MCF 10A (cell line): ENCODE measurements at regions of chr3 and their contacts with region 1.

Region 1: GRCh38 chr3:170740726-170741591 is 129.0 kb downstream of the RPL22L1 start:
- DNase-seq: peak; percentile 87
- H3K4me3 Mint-ChIP-seq: peak overlapping the region; percentile 5
- H3K27ac Mint-ChIP-seq: peak overlapping the region; percentile 85
- H3K4me1 Mint-ChIP-seq: peaks cover 44% of the 10 kb centered on the region
- H3K27me3 Mint-ChIP-seq: no peaks in the 10 kb centered on the region
- CTCF ChIP-seq: no peak

Region 2: DNA sequence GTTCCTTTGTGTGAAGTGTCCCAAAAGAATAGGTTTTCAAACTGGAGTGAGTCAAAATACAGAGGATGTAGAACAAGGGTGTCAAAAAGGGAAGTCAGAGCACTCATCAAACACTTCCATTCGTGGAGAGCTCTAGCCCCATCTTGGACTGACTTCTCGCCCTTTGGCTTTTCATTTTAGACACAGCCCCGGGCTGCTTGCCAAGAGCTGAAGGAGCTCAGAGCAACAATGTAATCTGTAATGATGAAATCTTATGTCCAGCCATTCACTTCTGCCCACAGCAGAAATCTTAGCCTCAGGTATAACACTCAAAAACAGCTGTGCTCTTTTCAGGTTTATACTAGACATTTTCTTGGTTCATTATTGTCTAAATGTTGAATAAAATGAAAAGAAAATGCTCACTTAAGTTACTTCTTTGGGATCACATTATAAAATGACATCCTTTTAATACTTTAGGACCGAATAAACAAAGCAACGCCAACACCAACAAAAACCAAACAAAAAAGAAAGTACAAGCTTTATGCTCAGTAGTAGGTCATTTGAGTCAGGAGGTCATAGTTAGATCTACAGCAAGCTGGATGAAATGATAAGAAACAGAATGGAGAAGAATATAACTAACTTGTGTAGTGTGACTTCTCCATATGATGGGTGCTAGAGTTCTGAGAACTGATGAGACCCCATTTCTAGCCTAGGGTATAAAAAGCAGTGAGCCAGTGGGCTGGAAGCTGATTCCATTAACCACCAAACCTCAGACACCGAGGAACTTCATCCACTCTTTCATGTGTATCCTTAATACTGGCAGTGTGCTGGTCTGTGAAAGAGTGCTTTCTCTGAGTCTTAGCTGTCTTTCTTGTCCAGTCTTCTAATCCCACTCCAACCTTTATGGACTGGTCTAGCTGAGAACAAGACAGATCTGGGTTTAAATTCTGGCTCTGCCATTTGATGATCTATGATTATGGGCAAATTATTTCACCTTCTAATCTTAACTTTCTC is 23.3 kb before region 1 on chr3:
- CTCF ChIA-PET with region 1: no interaction called
- POLR2A ChIA-PET with region 1: interaction called, 3 read pairs
- intact Hi-C with region 1: loop called (anchors 2 kb)
- DNase-seq: peak; percentile 85
- H3K4me3 Mint-ChIP-seq: no peak overlapping the region
- H3K27ac Mint-ChIP-seq: peak overlapping the region; percentile 16
- H3K4me1 Mint-ChIP-seq: peaks cover 20% of the 10 kb centered on the region
- H3K27me3 Mint-ChIP-seq: no peaks in the 10 kb centered on the region
- CTCF ChIP-seq: no peak

Region 3: DNA sequence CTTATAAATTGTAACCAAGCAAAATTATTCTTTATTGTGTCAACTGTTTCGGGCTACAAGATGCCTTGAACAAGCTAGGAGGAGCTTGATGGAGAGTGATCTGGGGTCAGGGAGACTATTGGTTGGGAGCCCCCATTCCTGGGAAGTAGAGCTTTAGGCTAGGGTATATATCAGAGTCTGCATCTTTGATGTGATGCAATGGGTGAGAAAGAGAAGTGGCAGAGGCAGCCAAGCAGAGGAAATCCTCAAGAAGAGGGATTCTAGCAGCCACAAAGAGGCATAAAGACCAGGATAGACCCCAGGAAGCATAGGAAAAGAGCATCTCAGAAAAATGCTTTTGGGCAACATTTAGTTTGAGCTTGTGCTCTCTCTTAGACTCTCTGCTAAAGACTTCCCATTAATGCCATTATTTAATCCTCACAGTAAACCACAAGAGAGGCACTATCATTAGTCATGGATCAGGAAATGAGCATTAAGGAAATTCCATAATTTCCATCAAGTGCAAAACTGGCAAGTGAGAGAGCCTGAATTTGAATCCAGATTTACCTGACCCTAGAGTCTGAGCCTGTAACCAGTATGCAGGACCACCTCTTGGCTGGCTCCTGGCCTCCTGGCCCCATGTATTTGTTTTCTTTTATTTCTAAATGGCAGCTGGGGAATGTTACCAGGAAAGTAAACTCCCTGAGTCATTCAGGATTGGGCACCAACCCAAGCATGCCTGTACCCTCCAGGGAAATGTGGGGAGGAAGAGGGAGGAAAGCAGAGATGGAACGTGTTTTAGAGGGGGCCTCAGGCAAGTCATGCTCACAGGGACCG is 10.3 kb after region 1 on chr3:
- CTCF ChIA-PET with region 1: no interaction called
- POLR2A ChIA-PET with region 1: interaction called, 14 read pairs
- intact Hi-C with region 1: no loop called
- DNase-seq: peak; percentile 93
- H3K4me3 Mint-ChIP-seq: peak overlapping the region; percentile 16
- H3K27ac Mint-ChIP-seq: peak overlapping the region; percentile 59
- H3K4me1 Mint-ChIP-seq: peaks cover 66% of the 10 kb centered on the region
- H3K27me3 Mint-ChIP-seq: no peaks in the 10 kb centered on the region
- CTCF ChIP-seq: no peak